Mucosa of descending colon (tissue), 3 donors: ENCODE measurements at regions of chr4 and their contacts with region 1.

Region 1: GRCh38 chr4:3442959-3443749 is 1.4 kb downstream of the HGFAC start:
- DNase-seq: peak; percentile 52 to 72 (median 58)
- ATAC-seq: peak; percentile 74
- H3K4me3 ChIP-seq: no peak overlapping the region
- H3K4me1 ChIP-seq: no peaks in the 10 kb centered on the region
- CTCF ChIP-seq: peak; percentile 94

Region 2: GRCh38 chr4:3346146-3346545 is 97.0 kb before region 1 on chr4:
- intact Hi-C with region 1: loop called in 1 of 2 experiments (anchors 5 kb)
- DNase-seq: peak in 1 of 3 donors; percentile 78
- ATAC-seq: peak; percentile 90
- H3K4me3 ChIP-seq: no peak overlapping the region
- H3K4me1 ChIP-seq: peaks cover 2% of the 10 kb centered on the region
- CTCF ChIP-seq: peak; percentile 64